Left cardiac atrium (tissue), 4 donors: ENCODE measurements at regions of chr2 and their contacts with region 1.

Region 1: GRCh38 chr2:32946314-32947075 is at the start of gene LTBP1:
- DNase-seq: peak; percentile 84
- ATAC-seq: peak; percentile 87 to 89
- total RNA-seq, gene LTBP1: 121 to 160 TPM

Region 2: DNA sequence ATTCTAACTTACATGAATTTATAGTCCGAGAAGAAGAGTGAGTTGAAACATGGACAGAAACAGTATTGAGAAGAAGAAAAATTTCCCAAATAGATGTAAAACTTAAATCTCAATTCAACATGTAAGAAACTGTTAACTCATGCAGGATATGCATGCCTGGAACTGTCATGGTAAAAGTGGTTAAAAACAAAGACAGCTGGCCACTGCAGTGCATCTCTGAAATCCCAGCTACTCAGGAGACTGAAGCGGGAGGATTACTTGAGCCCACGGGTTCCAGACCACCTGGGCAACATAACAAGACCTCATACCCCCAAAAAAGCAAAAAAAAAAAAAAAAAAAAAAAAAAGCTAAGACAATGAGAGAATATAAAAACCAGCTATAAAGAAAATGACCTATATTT is 411.7 kb before region 1 on chr2:
- intact Hi-C with region 1: no loop called
- DNase-seq: no peak
- ATAC-seq: no peak

Region 3: DNA sequence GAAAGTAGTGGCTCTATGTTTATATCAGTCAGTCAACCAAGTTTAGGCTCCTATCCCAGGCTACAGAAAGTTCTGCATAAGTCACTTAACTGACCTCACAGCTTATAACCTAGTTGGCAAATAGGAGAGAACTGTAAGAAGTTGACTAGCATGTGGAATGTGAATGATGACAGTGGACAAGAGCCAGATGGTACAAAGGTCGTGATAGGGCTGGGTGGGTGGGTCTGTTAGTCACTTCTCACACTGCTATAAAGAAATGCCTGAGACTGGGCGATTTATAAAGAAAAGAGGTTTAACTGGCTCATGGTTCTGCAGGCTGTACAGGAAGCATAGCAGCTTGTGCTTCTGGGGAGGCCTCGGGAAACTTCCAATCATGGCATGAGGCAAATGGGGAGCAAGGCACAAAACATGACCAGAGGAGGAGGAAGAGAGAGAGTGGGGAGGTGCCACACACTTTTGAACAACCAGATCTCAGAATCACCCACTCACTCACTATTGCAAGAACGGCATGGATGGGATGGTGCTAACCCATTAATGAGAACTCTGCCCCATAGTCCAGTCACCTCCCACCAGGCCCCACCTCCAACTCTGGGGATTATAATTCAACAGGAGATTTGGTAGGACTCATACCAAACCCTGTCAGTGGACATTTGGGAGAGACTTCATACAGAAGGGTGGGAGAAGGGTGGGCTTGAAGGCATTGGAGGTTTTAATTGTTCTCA is 69.1 kb after region 1 on chr2:
- intact Hi-C with region 1: loop called in 1 of 2 experiments (anchors 10 kb)
- DNase-seq: no peak
- ATAC-seq: peak; percentile 73 to 84

Region 4: GRCh38 chr2:33304032-33304864 is 357.8 kb after region 1 on chr2:
- intact Hi-C with region 1: no loop called
- DNase-seq: no peak
- ATAC-seq: peak; percentile 33 to 56